ENCODE measurements at regions of chr20 and their contacts with region 1.

Region 1: GRCh38 chr20:45771182-45771759 is 20.4 kb downstream of the WFDC3 start:
- DNase-seq: peak; percentile 80 to 91
- H3K4me3 ChIP-seq: no peak overlapping the region
- H3K27ac ChIP-seq: no peak overlapping the region
- H3K4me1 ChIP-seq: peaks cover 2 to 7% (median 5%) of the 10 kb centered on the region in 4 experiments
- H3K27me3 ChIP-seq: no peaks in the 10 kb centered on the region
- CTCF ChIP-seq: peak; percentile 61 to 94 (median 93)
- EP300 ChIP-seq: no peak
- POLR2A ChIP-seq: no peak
- RAD21 ChIP-seq: peak; percentile 99

Region 2: DNA sequence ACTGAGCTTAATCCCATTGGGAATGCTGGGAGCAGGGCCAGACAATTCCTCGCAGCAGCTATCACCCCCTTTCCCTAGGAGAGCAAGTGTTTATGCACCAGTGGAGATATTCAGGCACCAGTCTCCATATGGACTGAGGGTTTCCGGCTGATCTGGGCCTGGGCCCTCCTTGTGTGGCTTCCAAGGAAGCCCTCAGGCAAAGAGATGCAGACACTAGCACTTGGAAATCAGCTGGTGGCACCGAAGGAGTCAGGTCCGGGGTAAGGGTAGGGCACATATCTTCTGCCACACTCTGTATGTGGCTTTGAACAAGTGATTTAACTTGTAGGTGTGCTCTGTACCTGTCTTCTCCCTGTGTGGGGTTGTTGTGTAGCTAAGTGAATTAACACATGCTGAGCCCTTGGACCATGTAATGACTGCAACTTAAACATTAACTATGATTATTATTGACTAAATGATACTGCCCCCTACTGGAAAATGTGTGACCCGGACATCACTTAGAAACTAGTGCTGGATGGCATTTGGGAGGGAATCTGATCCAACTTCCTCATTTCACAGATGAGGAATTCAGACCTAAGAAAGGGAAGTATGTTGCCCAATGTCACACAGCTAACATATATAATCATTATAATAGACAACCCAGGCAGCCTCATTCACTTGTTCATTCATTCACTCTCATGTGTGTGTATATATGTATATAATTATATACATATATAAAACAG is 321.0 kb before region 1 on chr20:
- CTCF ChIA-PET with region 1: interaction called, 67 read pairs
- POLR2A ChIA-PET with region 1: no interaction called
- DNase-seq: no peak
- H3K4me3 ChIP-seq: no peak overlapping the region
- H3K27ac ChIP-seq: no peak overlapping the region
- H3K4me1 ChIP-seq: no peaks in the 10 kb centered on the region; a peak in 1 of 7 replicates
- H3K27me3 ChIP-seq: no peaks in the 10 kb centered on the region
- CTCF ChIP-seq: peak in 2 of 3 experiments; percentile 56 to 73; a peak in 3 of 4 replicates
- EP300 ChIP-seq: no peak
- POLR2A ChIP-seq: no peak
- RAD21 ChIP-seq: peak; percentile 43 to 49

Region 3: DNA sequence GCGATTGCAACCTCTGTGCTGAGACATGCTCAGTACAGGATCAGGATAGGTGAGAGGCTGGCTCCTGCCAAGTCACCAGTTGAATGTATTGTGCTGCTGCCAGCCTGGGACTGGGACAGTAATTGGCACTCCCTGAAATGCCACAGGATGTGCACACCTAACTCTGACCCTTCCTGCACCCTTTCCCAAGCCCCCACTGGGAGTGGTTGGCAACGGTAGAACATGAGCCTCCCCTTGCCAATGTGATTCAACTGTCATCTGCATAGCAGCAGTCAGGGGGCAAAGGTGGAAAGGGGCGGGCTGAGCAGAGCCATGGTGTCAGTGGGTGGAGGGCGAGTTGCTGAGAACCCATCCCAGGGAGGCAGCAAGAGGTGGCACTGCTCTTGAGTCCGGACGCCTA is 271.2 kb before region 1 on chr20:
- CTCF ChIA-PET with region 1: interaction called, 22 read pairs
- POLR2A ChIA-PET with region 1: no interaction called
- DNase-seq: no peak
- H3K4me3 ChIP-seq: no peak overlapping the region
- H3K27ac ChIP-seq: no peak overlapping the region
- H3K4me1 ChIP-seq: 0 out of 7 replicates have a peak, but pooled peaks cover 0 to 3% (median 0%) of the 10 kb centered on the region in 4 experiments
- H3K27me3 ChIP-seq: no peaks in the 10 kb centered on the region
- CTCF ChIP-seq: no peak
- EP300 ChIP-seq: no peak
- POLR2A ChIP-seq: no peak
- RAD21 ChIP-seq: no peak

Region 4: DNA sequence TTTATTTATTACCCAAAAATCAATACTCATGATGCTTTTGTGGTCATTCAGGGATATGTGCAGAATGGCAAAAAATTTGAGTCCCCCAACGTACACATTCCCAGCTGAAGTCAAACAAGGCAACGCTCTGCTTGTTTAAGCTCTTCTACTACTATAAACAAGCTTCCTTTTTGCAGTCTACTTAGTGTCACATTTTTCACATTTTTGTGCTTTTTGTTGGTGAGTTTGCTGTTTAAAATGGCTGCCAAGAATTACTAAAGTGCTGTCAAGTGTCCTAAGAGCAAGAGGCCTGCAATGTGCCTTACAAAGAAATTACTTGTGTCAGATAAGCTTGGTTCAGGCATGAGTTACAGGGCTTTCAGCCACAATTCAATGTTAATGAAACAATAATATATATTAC is 194.3 kb before region 1 on chr20:
- CTCF ChIA-PET with region 1: interaction called, 30 read pairs
- POLR2A ChIA-PET with region 1: no interaction called
- DNase-seq: no peak
- H3K4me3 ChIP-seq: no peak overlapping the region
- H3K27ac ChIP-seq: no peak overlapping the region
- H3K4me1 ChIP-seq: peaks cover 0 to 5% (median 2%) of the 10 kb centered on the region in 4 experiments; a peak in 4 of 7 replicates
- H3K27me3 ChIP-seq: no peaks in the 10 kb centered on the region
- CTCF ChIP-seq: no peak
- EP300 ChIP-seq: no peak
- POLR2A ChIP-seq: no peak
- RAD21 ChIP-seq: no peak

Region 5: DNA sequence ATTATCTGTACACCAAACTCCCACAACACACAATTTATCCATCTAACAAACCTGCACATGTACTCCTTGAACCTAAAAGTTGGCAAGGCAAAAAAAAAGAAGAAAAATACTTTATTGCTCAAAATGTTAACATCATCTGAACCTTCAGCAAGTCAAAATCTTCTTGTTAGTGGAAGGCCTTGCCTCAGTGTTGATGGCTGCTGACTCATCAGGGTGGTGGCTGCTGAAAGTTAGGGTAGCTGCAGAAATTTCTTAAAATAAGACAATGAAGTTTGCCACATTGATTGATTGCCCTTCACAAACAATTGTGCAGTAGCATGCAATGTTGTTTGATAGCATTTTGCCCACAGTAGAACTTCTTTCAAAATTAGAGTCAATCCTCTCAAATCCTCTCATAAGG is 98.5 kb before region 1 on chr20:
- CTCF ChIA-PET with region 1: interaction called, 10 read pairs
- POLR2A ChIA-PET with region 1: no interaction called
- DNase-seq: no peak
- H3K4me3 ChIP-seq: no peak overlapping the region
- H3K27ac ChIP-seq: no peak overlapping the region
- H3K4me1 ChIP-seq: no peaks in the 10 kb centered on the region
- H3K27me3 ChIP-seq: no peaks in the 10 kb centered on the region
- CTCF ChIP-seq: no peak
- EP300 ChIP-seq: no peak
- POLR2A ChIP-seq: no peak
- RAD21 ChIP-seq: no peak

Region 6: GRCh38 chr20:46089417-46090388 is 318.4 kb after region 1 on chr20 and contains the start of gene NCOA5:
- CTCF ChIA-PET with region 1: no interaction called
- POLR2A ChIA-PET with region 1: no interaction called
- DNase-seq: peak; percentile 80 to 92
- H3K4me3 ChIP-seq: peak within 1 kb of the TSS; percentile 78 to 97 (median 84)
- H3K27ac ChIP-seq: peak within 1 kb of the TSS; percentile 99
- H3K4me1 ChIP-seq: peaks cover 0 to 6% (median 2%) of the 10 kb centered on the region in 4 experiments; a peak in 4 of 7 replicates
- H3K27me3 ChIP-seq: no peaks in the 10 kb centered on the region
- CTCF ChIP-seq: peak; percentile 7 to 29 (median 11); a peak in 3 of 4 replicates
- EP300 ChIP-seq: no peak
- POLR2A ChIP-seq: peak; percentile 94 to 95; a peak in 2 of 3 replicates
- RAD21 ChIP-seq: peak; percentile 5 to 35; a peak in 3 of 4 replicates
- total RNA-seq, gene NCOA5: 29.0 and 29.9 TPM in 2 replicates